MCF 10A (cell line): ENCODE measurements at regions of chr5 and their contacts with region 1.

Region 1: GRCh38 chr5:32613050-32613672 is 27.8 kb downstream of the SUB1 start:
- DNase-seq: peak; percentile 84
- H3K4me3 Mint-ChIP-seq: no peak overlapping the region
- H3K27ac Mint-ChIP-seq: no peak overlapping the region
- H3K4me1 Mint-ChIP-seq: peaks cover 9% of the 10 kb centered on the region
- H3K27me3 Mint-ChIP-seq: no peaks in the 10 kb centered on the region
- CTCF ChIP-seq: peak; percentile 84

Region 2: DNA sequence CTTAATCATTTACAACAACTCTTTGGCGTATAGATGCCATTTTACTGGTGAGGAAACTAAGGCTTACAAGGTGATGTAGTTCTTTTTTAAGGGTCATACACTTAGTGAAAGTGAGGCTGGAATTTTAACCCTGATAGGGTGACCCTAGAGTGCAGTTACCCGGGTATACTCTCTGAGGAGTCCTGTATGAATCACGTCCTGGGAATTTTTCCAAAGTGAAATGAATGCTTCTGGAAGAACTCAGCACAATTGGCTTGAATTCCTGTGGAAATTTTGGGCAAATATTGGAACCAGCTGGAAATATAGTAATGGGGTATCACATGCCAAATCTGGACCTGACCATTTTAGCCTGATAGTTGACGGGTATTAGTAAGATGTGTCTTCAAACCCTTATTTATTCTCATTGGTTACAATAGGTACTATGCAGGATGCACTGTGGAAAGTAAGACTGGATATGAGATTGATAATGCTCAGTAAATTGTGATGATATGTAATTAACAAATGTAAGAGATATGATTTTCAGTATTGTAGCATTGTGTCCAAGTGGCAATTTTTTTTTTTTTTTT is 13.0 kb before region 1 on chr5:
- CTCF ChIA-PET with region 1: interaction called, 12 read pairs
- POLR2A ChIA-PET with region 1: interaction called, 4 read pairs
- intact Hi-C with region 1: no loop called
- DNase-seq: peak; percentile 76
- H3K4me3 Mint-ChIP-seq: peak overlapping the region; percentile 6
- H3K27ac Mint-ChIP-seq: no peak overlapping the region
- H3K4me1 Mint-ChIP-seq: peaks cover 24% of the 10 kb centered on the region
- H3K27me3 Mint-ChIP-seq: no peaks in the 10 kb centered on the region
- CTCF ChIP-seq: no peak

Region 3: GRCh38 chr5:32664523-32664922 is 51.4 kb after region 1 on chr5:
- CTCF ChIA-PET with region 1: no interaction called
- POLR2A ChIA-PET with region 1: no interaction called
- intact Hi-C with region 1: no loop called
- DNase-seq: peak; percentile 26
- H3K4me3 Mint-ChIP-seq: no peak overlapping the region
- H3K27ac Mint-ChIP-seq: no peak overlapping the region
- H3K4me1 Mint-ChIP-seq: no peaks in the 10 kb centered on the region
- H3K27me3 Mint-ChIP-seq: no peaks in the 10 kb centered on the region
- CTCF ChIP-seq: no peak